ENCODE measurements at regions of chr9 and their contacts with region 1.

Region 1: GRCh38 chr9:134449221-134449894 is 123.1 kb downstream of the RXRA start:
- H3K4me3 ChIP-seq: no peak overlapping the region
- H3K27ac ChIP-seq: no peak overlapping the region
- H3K4me1 ChIP-seq: no peaks in the 10 kb centered on the region
- CTCF ChIP-seq: peak; percentile 87

Region 2: GRCh38 chr9:134171316-134172197 is 277.8 kb before region 1 on chr9:
- CTCF ChIA-PET with region 1: interaction called, 73 read pairs
- POLR2A ChIA-PET with region 1: no interaction called
- H3K4me3 ChIP-seq: no peak overlapping the region
- H3K27ac ChIP-seq: no peak overlapping the region
- H3K4me1 ChIP-seq: no peaks in the 10 kb centered on the region
- CTCF ChIP-seq: no peak

Region 3: GRCh38 chr9:134407123-134407808 is 42.1 kb before region 1 on chr9:
- CTCF ChIA-PET with region 1: no interaction called
- POLR2A ChIA-PET with region 1: no interaction called
- H3K4me3 ChIP-seq: no peak overlapping the region
- H3K27ac ChIP-seq: no peak overlapping the region
- H3K4me1 ChIP-seq: no peaks in the 10 kb centered on the region
- CTCF ChIP-seq: no peak

Region 4: GRCh38 chr9:134660407-134660806 is 211.0 kb after region 1 on chr9:
- CTCF ChIA-PET with region 1: interaction called, 33 read pairs
- POLR2A ChIA-PET with region 1: no interaction called
- H3K4me3 ChIP-seq: no peak overlapping the region
- H3K27ac ChIP-seq: no peak overlapping the region
- H3K4me1 ChIP-seq: no peaks in the 10 kb centered on the region
- CTCF ChIP-seq: no peak

Region 5: GRCh38 chr9:134689321-134690181 is 240.2 kb after region 1 on chr9:
- CTCF ChIA-PET with region 1: interaction called, 40 read pairs
- POLR2A ChIA-PET with region 1: no interaction called
- H3K4me3 ChIP-seq: no peak overlapping the region
- H3K27ac ChIP-seq: no peak overlapping the region
- H3K4me1 ChIP-seq: no peaks in the 10 kb centered on the region
- CTCF ChIP-seq: peak; percentile 67

Region 6: GRCh38 chr9:134707031-134707680 is 257.8 kb after region 1 on chr9:
- CTCF ChIA-PET with region 1: interaction called, 13 read pairs
- POLR2A ChIA-PET with region 1: no interaction called
- H3K4me3 ChIP-seq: no peak overlapping the region
- H3K27ac ChIP-seq: peak overlapping the region; percentile 55
- H3K4me1 ChIP-seq: peaks cover 5% of the 10 kb centered on the region; the same call in 1 of the 2 replicates
- CTCF ChIP-seq: no peak

Region 7: DNA sequence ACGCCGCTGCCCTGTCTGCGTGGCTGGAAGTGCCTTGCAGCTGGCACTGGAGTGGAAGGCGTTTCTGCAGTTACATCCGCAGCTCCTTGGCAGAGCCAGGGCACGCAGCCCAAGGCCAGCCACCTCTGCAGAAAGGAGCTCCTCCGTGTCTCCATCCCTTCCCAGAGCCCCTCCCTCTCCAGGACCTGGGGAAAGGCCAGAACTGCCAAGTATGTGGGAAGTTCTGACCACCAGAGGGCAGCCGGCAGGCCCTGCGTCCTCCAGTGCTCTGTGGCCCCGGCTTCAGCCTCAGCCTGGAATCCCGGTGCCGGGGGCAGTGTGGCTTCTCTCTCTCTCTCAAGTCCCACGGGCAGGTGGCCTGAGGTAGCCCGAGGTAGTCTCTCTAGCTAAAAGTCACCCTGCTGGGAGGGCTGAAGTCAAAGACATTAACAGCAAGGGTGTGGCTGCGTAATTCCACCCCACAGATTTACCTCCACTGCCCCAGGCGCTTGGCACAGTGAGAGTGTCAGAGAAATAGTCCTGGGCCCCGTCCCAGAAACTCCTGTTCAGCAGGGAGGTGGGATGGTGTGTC is 329.6 kb after region 1 on chr9:
- CTCF ChIA-PET with region 1: interaction called, 14 read pairs
- POLR2A ChIA-PET with region 1: no interaction called
- H3K4me3 ChIP-seq: no peak overlapping the region
- H3K27ac ChIP-seq: no peak overlapping the region
- H3K4me1 ChIP-seq: peaks cover 3% of the 10 kb centered on the region; the same call in 1 of the 2 replicates
- CTCF ChIP-seq: peak; percentile 75